ENCODE measurements at regions of chr9 and their contacts with region 1.

Region 1: DNA sequence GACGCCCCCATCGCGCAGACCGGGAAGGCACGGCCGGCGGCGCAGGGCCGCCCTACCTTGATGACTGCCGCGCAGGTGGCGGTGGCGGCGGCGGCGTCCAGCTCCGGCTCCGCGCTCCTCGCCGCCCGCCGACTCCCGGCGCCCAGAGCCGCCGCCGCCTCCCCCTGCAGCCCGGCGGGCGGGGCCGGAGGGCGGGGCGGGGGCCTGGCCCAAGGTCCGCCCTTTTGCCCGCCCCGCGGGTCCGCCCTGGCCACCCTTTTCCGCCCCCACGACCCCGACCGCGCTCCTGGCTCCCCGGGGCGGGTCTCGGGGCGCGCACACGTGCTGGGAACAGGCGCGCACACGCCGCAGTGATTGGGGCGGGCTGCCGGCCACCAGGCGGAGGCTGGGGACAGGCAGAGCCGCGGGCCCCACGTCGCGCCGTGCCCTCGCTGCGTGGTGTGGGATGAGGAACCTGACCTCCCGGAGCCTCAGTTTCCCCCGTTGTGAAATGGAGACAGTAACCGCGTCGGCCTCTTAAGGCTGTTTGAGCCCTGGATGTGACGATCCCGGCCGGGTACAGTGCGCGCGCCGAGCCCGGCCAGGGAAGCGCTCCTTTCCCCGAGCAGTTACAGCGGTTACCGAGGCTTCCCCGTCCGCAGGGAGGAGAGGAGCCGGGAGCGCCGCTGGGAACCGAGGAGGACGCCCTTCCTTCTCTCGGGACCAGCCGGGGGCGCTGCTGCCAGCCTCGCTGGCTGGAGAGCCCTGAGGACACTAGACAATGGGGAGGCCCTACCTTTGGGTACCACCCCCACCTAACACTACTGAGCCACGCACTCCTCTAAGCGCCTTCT is at the start of gene CORO2A:
- DNase-seq: peak; percentile 37 to 85 (median 47)
- ATAC-seq: peak; percentile 86
- H3K4me3 ChIP-seq: peak within 1 kb of the TSS; percentile 81
- H3K4me3 Mint-ChIP-seq: peak within 1 kb of the TSS; percentile 76 to 92 (median 86)
- H3K27ac ChIP-seq: peak within 1 kb of the TSS; percentile 53
- H3K27ac Mint-ChIP-seq: peak within 1 kb of the TSS; percentile 19 to 90 (median 83)
- H3K4me1 ChIP-seq: peaks cover 17 to 22% of the 10 kb centered on the region in 2 donors
- H3K4me1 Mint-ChIP-seq: peaks cover 12 to 46% (median 41%) of the 10 kb centered on the region in 7 donors
- H3K27me3 ChIP-seq: no peaks in the 10 kb centered on the region
- H3K27me3 Mint-ChIP-seq: peaks cover 0 to 17% (median 0%) of the 10 kb centered on the region in 5 donors
- total RNA-seq, gene CORO2A: 3.0 to 9.7 (median 7.7) TPM

Region 2: DNA sequence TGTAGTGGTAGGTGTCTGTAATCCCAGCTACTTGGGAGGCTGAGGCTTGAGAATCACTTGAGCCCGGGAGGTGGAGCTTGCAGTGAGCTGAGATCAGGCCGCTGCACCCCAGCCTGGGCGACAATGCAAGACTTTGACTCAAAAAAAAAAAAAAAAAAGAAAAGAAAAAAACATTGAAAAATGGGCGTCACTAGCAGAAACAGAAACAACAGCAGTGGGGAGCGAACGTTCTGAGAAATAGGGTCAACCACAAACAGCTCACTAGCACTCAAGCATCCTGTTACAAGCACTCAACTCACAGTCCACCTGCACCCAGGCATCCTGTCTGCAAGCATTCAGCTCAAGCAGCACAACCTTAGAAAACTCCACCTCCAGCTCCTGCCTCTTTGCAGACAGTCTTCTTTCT is 90.8 kb before region 1 on chr9:
- CTCF ChIA-PET with region 1: interaction called, 4 read pairs
- POLR2A ChIA-PET with region 1: interaction called, 4 read pairs
- intact Hi-C with region 1: loop called in 1 of 2 experiments (anchors 1 kb)
- DNase-seq: peak; percentile 35 to 96 (median 92)
- ATAC-seq: peak; percentile 99
- H3K4me3 ChIP-seq: peak overlapping the region; percentile 31
- H3K4me3 Mint-ChIP-seq: peak overlapping the region; percentile 66 to 86 (median 77)
- H3K27ac ChIP-seq: peak overlapping the region; percentile 78
- H3K27ac Mint-ChIP-seq: peak overlapping the region; percentile 87 to 99 (median 95)
- H3K4me1 ChIP-seq: peaks cover 88 to 91% of the 10 kb centered on the region in 2 donors
- H3K4me1 Mint-ChIP-seq: peaks cover 52 to 97% (median 88%) of the 10 kb centered on the region in 7 donors
- H3K27me3 ChIP-seq: no peaks in the 10 kb centered on the region
- H3K27me3 Mint-ChIP-seq: no peaks in the 10 kb centered on the region

Region 3: GRCh38 chr9:98146101-98146991 is 46.4 kb before region 1 on chr9:
- CTCF ChIA-PET with region 1: no interaction called
- POLR2A ChIA-PET with region 1: no interaction called
- intact Hi-C with region 1: loop called in 1 of 2 experiments (anchors 5 kb)
- DNase-seq: no peak
- ATAC-seq: peak; percentile 79
- H3K4me3 ChIP-seq: no peak overlapping the region
- H3K4me3 Mint-ChIP-seq: no peak overlapping the region
- H3K27ac ChIP-seq: no peak overlapping the region
- H3K27ac Mint-ChIP-seq: no peak overlapping the region
- H3K4me1 ChIP-seq: no peaks in the 10 kb centered on the region
- H3K4me1 Mint-ChIP-seq: peaks cover 3 to 17% (median 4%) of the 10 kb centered on the region in 7 donors
- H3K27me3 ChIP-seq: no peaks in the 10 kb centered on the region
- H3K27me3 Mint-ChIP-seq: no peaks in the 10 kb centered on the region

Region 4: DNA sequence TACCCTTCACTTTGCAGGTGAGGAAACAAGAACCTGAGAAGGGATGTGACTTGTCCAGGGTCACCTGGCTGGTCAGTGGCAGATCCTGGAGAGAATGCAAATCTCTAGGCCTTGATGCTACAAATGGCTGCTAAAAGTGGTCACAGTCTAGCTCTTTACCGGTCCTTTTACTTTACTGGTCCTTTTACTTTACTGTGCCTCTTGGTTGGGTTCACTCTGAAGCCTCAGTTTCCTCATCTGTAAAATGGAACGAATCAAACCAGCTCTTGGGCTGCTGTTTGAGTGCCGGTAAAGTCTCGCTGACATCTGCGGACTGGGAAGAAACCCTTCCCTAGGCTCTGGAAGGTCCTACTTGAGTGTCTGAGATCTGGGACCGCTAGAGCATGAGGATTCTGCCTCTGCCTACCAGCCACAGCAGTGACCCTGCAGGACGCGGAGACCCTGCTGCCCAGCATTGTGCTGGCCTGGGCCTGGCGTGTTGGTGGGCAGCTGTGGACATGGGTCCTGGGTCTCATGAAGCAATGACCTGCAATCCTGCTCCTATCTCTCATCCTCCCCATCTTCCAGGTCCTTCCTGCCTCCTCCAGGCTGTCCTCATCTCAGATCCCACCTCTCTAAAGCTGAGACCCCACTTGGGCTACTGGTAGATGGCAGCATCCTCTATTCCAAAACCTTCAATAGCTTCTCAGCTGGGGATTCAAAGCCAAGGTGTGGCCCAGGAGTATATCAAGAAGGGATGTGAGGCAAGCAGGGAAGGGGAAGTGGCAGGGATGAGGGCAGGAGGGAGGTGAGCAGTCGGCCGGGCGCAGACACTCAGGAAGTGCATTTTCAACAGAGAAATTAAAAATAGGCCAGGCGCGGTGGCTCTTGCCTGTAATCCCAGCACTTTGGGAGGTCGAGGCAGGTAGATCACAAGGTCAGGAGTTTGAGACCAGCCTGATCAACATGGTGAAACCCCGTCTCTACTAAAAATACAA is 13.6 kb before region 1 on chr9:
- CTCF ChIA-PET with region 1: no interaction called
- POLR2A ChIA-PET with region 1: interaction called, 3 read pairs
- intact Hi-C with region 1: loop called in 1 of 2 experiments (anchors 2 kb)
- DNase-seq: no peak
- ATAC-seq: no peak
- H3K4me3 ChIP-seq: no peak overlapping the region
- H3K4me3 Mint-ChIP-seq: no peak overlapping the region
- H3K27ac ChIP-seq: no peak overlapping the region
- H3K27ac Mint-ChIP-seq: peak overlapping the region in 2 of 9 donors; percentile 13 to 46
- H3K4me1 ChIP-seq: no peaks in the 10 kb centered on the region
- H3K4me1 Mint-ChIP-seq: peaks cover 6 to 53% (median 38%) of the 10 kb centered on the region in 7 donors
- H3K27me3 ChIP-seq: no peaks in the 10 kb centered on the region
- H3K27me3 Mint-ChIP-seq: peaks cover 0 to 3% (median 0%) of the 10 kb centered on the region in 5 donors

Region 5: DNA sequence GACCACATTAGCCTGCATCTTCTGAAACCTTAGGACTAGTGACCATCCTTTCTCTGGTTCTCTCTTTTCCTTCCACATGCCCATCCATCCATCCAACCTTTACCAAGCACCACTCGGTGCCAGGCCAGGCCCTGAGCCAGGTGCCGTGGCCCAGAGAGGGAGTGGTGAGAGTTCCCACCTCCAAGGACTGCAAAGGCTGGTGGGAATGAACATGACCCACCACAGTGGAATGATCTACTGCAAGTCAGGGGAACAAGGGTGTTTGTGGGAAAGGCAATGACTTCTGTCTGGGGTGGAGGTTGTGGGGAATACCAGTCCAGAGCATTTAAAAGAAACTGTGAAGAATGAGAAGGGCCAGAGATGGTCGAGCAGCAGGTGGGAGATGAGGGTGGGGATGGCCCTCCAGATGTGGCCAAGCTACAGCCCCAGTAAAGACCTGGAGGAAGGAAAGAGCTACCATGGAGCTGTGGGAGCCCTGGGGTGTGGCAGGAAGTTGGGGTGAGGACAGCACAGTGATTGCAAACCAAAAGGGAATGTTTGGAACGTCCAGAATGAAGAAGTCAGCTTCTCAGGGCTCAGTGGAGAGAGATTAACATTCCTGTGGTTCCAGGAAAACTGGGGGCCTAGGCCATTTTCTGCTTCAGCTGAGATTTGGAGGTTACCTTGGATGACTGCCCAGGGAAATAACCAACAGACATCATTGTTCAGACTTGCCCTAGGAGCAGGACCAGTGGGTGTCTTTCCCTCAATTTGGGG is 30.3 kb after region 1 on chr9:
- CTCF ChIA-PET with region 1: no interaction called
- POLR2A ChIA-PET with region 1: no interaction called
- intact Hi-C with region 1: no loop called
- DNase-seq: no peak
- ATAC-seq: no peak
- H3K4me3 ChIP-seq: no peak overlapping the region
- H3K4me3 Mint-ChIP-seq: no peak overlapping the region
- H3K27ac ChIP-seq: no peak overlapping the region
- H3K27ac Mint-ChIP-seq: peak overlapping the region in 2 of 9 donors; percentile 7 to 36
- H3K4me1 ChIP-seq: no peaks in the 10 kb centered on the region
- H3K4me1 Mint-ChIP-seq: peaks cover 0 to 9% (median 5%) of the 10 kb centered on the region in 7 donors
- H3K27me3 ChIP-seq: no peaks in the 10 kb centered on the region
- H3K27me3 Mint-ChIP-seq: no peaks in the 10 kb centered on the region

Measured in naive thymus-derived CD4-positive, alpha-beta T cell (primary cell).